GM12878 (cell line): ENCODE measurements at regions of chr15 and their contacts with region 1.

Region 1: DNA sequence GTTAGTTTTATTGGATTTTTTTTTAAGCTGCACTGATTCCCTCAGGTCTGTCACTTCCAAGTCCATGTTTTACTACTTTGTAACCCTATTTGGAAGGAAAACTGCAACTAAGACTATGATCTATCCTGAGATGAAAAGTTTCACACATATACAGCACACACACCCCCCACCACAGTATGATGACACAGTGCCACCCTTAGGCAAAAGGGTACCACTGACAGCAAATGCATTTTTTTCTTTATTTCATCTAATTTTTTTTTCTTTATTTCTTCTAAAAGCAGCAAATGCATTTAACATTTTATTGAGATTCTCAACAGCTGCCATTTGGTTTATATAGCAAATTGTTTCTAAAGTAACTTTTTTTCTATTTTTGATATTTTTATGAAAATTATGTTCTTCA is 21.2 kb downstream of the NGRN start:
- DNase-seq: no peak
- ATAC-seq: peak; percentile 92
- H3K4me3 ChIP-seq: no peak overlapping the region
- H3K27ac ChIP-seq: no peak overlapping the region
- H3K4me1 ChIP-seq: no peaks in the 10 kb centered on the region
- H3K27me3 ChIP-seq: no peaks in the 10 kb centered on the region
- CTCF ChIP-seq: peak; percentile 54 to 80 (median 61); a peak in 5 of 6 replicates
- EP300 ChIP-seq: no peak
- POLR2A ChIP-seq: no peak
- RAD21 ChIP-seq: peak; percentile 90

Region 2: DNA sequence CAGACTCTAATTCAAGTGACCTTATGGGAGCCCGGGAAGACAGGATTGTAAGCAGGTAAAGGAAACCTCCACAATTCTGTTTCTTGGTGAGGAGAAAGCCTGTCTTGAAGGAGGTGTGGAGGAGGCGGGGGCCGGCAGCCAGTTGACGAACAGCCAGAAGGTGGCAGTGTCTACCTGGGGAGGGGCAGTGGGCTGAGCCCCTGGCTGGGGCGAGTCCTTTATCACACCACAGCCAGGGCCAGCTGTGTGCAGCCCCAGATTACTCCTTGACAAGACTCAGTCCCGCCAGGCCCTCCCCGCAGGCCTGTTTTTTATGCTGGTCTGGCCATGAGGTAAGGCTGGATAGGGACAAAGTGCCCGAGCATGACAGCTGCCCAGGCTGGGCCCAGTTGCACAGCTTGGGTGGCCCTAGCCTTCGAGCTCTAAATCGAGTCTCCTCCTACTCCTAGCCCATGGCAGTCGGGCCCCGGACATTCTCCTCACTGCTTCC is 143.5 kb before region 1 on chr15:
- CTCF ChIA-PET with region 1: interaction called, 17 read pairs
- POLR2A ChIA-PET with region 1: interaction called, 3 read pairs
- RAD21 ChIA-PET with region 1: interaction called, 3 read pairs
- SMC1A ChIA-PET with region 1: interaction called, 6 read pairs
- in situ Hi-C with region 1: no loop called
- intact Hi-C with region 1: loop called (anchors 5 kb)
- DNase-seq: no peak
- ATAC-seq: peak; percentile 97
- H3K4me3 ChIP-seq: no peak overlapping the region
- H3K27ac ChIP-seq: no peak overlapping the region
- H3K4me1 ChIP-seq: peaks cover 5% of the 10 kb centered on the region
- H3K27me3 ChIP-seq: no peaks in the 10 kb centered on the region
- CTCF ChIP-seq: peak; percentile 75 to 83 (median 83)
- EP300 ChIP-seq: no peak
- POLR2A ChIP-seq: no peak
- RAD21 ChIP-seq: peak; percentile 83

Region 3: DNA sequence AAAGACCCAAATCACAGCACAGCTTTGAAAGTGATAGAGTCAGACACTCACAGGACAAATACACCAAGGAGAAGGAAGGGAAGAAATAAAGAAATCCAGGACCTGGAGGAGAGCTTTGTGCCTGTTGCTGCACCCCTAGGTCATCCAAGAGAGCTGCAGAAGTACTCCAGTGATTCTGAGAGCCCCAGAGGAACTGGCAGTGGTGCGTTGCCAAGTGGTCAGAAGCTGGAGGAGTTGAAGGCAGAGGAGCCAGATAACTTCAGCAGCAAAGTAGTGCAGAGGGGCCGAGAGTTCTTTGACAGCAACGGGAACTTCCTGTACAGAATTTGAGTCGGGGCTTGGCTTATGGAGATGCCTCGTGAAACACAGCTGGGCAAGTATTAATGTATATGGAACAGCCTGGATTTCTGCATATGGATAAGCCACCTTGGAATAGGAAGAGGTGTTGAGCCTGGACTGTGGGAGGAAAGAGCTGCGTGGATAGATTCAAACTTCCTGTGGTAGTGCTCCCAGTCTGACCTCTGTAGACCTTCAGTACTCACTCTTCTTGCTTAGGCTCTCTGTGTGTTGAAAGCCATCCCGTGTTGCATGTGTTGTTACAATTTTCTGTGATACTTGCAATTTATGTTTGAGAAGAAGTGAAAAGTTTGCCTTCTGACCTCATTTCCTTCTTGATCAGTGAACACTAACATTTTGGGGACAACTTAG is 15.1 kb before region 1 on chr15:
- CTCF ChIA-PET with region 1: interaction called, 8 read pairs
- POLR2A ChIA-PET with region 1: interaction called, 3 read pairs
- RAD21 ChIA-PET with region 1: interaction called, 5 read pairs
- SMC1A ChIA-PET with region 1: interaction called, 11 read pairs
- in situ Hi-C with region 1: no loop called
- intact Hi-C with region 1: no loop called
- DNase-seq: no peak
- ATAC-seq: peak; percentile 27; the same call in 1 of the 3 replicates
- H3K4me3 ChIP-seq: no peak overlapping the region
- H3K27ac ChIP-seq: no peak overlapping the region
- H3K4me1 ChIP-seq: no peaks in the 10 kb centered on the region
- H3K27me3 ChIP-seq: no peaks in the 10 kb centered on the region
- CTCF ChIP-seq: no peak
- EP300 ChIP-seq: no peak
- POLR2A ChIP-seq: no peak
- RAD21 ChIP-seq: no peak

Region 4: GRCh38 chr15:90306560-90306959 is 19.9 kb after region 1 on chr15:
- CTCF ChIA-PET with region 1: interaction called, 99 read pairs
- POLR2A ChIA-PET with region 1: interaction called, 7 read pairs
- RAD21 ChIA-PET with region 1: interaction called, 3 read pairs
- SMC1A ChIA-PET with region 1: interaction called, 8 read pairs
- in situ Hi-C with region 1: no loop called
- intact Hi-C with region 1: no loop called
- DNase-seq: peak; percentile 36
- ATAC-seq: peak; percentile 96
- H3K4me3 ChIP-seq: peak overlapping the region; percentile 17; the same call in 1 of the 2 replicates
- H3K27ac ChIP-seq: peak overlapping the region; percentile 60
- H3K4me1 ChIP-seq: peaks cover 22% of the 10 kb centered on the region
- H3K27me3 ChIP-seq: no peaks in the 10 kb centered on the region
- CTCF ChIP-seq: peak in 1 of 3 experiments; percentile 37; a peak in 2 of 6 replicates
- EP300 ChIP-seq: no peak
- POLR2A ChIP-seq: 0 out of 2 replicates have a peak, but pooled peaks have one; percentile 28
- RAD21 ChIP-seq: peak; percentile 39

Region 5: GRCh38 chr15:90774731-90775484 is 488.2 kb after region 1 on chr15:
- CTCF ChIA-PET with region 1: no interaction called
- POLR2A ChIA-PET with region 1: no interaction called
- RAD21 ChIA-PET with region 1: no interaction called
- SMC1A ChIA-PET with region 1: no interaction called
- in situ Hi-C with region 1: no loop called
- intact Hi-C with region 1: no loop called
- DNase-seq: no peak
- ATAC-seq: no peak
- H3K4me3 ChIP-seq: no peak overlapping the region
- H3K27ac ChIP-seq: no peak overlapping the region
- H3K4me1 ChIP-seq: no peaks in the 10 kb centered on the region
- H3K27me3 ChIP-seq: no peaks in the 10 kb centered on the region
- CTCF ChIP-seq: no peak
- EP300 ChIP-seq: no peak
- POLR2A ChIP-seq: no peak
- RAD21 ChIP-seq: no peak